ENCODE measurements at regions of chr1 and their contacts with region 1.

Region 1: DNA sequence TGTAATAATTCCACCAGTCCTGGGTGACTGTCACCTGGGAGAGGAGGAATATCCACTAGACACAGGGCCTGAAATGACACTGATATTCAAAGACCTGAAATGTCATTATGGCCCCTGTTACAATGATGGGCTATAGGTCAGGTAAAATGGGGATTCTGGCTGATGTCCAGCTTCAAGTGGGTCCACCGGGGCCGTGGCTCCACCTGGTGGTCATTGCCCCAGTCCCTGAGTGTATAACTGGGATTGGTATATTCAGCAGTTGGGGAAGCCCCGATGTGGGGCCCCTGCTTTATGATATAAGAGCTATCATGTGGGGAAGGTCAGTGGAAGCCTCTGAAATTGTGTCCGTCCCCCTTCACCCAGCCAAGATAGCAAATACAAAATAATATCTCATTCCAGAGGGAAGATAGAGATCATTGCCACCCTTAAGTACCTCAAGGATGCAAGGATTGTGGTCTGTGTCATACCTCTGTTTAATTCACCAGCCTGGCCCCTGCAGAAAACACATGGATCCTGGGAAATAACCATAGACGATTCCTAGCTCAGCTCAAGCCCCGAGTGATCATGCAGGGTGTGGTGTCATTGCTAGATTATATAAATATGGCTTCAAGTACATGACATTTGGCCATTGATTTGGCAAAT is 19.4 kb downstream of the PLEKHO1 start:
- DNase-seq: peak in 1 of 2 donors; percentile 87
- H3K4me3 ChIP-seq: no peak overlapping the region
- H3K27ac ChIP-seq: no peak overlapping the region
- H3K4me1 ChIP-seq: peaks cover 4 to 8% of the 10 kb centered on the region in 2 donors
- H3K27me3 ChIP-seq: no peaks in the 10 kb centered on the region
- CTCF ChIP-seq: peak; percentile 72 to 85 (median 81)

Region 2: GRCh38 chr1:149962123-149962548 is 206.9 kb before region 1 on chr1:
- intact Hi-C with region 1: loop called (anchors 5 kb)
- DNase-seq: peak in 1 of 2 donors; percentile 79
- H3K4me3 ChIP-seq: no peak overlapping the region
- H3K27ac ChIP-seq: peak overlapping the region; percentile 51 to 65
- H3K4me1 ChIP-seq: peaks cover 0 to 13% of the 10 kb centered on the region in 2 donors
- H3K27me3 ChIP-seq: no peaks in the 10 kb centered on the region
- CTCF ChIP-seq: peak; percentile 70 to 80 (median 75)

Region 3: DNA sequence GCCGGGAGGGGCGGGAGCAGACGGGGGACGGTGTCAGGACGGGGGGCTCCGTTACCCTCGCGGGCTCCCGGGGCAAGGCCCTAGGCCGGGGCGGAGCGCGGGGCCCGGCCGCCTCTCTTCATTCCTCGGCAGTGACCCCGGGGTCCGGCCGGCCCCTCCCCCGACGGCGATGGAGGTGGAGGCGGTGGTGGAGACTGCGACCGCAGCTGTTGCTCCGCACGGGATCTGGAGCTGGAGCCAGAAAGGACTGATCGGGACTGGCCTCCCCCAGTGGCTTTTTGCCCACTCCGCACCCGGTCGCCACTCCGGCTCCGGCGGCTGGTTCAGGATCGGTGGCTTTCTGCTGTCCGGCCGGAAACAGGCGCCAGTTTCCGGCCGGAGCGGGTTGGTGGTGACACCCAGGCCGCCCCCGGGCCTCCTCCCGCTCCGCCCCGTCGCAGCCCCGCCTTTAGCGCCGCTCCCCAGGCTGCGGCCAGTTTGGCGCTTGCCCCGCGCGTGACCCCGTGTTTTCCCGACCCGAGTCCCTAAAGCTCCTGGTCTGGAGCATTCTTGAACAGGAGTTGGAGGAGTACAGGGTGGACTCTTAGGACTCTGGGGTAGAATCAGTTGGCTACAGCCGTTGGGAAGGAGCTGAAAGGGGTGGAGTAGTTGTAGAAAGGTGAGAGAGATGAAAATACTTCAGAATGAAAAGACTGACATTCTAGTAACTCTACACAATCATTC is 158.5 kb before region 1 on chr1 and contains the start of gene OTUD7B:
- intact Hi-C with region 1: loop called (anchors 5 kb)
- DNase-seq: peak; percentile 28 to 92
- H3K4me3 ChIP-seq: peak within 1 kb of the TSS; percentile 78 to 92
- H3K27ac ChIP-seq: peak within 1 kb of the TSS; percentile 97 to 99
- H3K4me1 ChIP-seq: peaks cover 12 to 15% of the 10 kb centered on the region in 2 donors
- H3K27me3 ChIP-seq: no peaks in the 10 kb centered on the region
- CTCF ChIP-seq: no peak
- total RNA-seq, gene OTUD7B: 7.1 TPM

Region 4: GRCh38 chr1:150072959-150073358 is 96.1 kb before region 1 on chr1:
- intact Hi-C with region 1: loop called (anchors 2 kb)
- DNase-seq: no peak
- H3K4me3 ChIP-seq: no peak overlapping the region
- H3K27ac ChIP-seq: no peak overlapping the region
- H3K4me1 ChIP-seq: peaks cover 4 to 6% of the 10 kb centered on the region in 2 donors
- H3K27me3 ChIP-seq: no peaks in the 10 kb centered on the region
- CTCF ChIP-seq: peak in 1 of 3 experiments; percentile 54

Region 5: GRCh38 chr1:150281837-150282653 is 113.0 kb after region 1 on chr1 and contains the start of gene CIART:
- intact Hi-C with region 1: no loop called
- DNase-seq: peak; percentile 93 to 98
- H3K4me3 ChIP-seq: peak within 1 kb of the TSS; percentile 67 to 85
- H3K27ac ChIP-seq: peak within 1 kb of the TSS; percentile 79 to 92
- H3K4me1 ChIP-seq: peaks cover 0 to 18% of the 10 kb centered on the region in 2 donors
- H3K27me3 ChIP-seq: no peaks in the 10 kb centered on the region
- CTCF ChIP-seq: no peak
- total RNA-seq, gene CIART: 0.64 TPM

Region 6: GRCh38 chr1:150346316-150346715 is 177.2 kb after region 1 on chr1:
- intact Hi-C with region 1: no loop called
- DNase-seq: no peak
- H3K4me3 ChIP-seq: no peak overlapping the region
- H3K27ac ChIP-seq: no peak overlapping the region
- H3K4me1 ChIP-seq: no peaks in the 10 kb centered on the region
- H3K27me3 ChIP-seq: no peaks in the 10 kb centered on the region
- CTCF ChIP-seq: no peak

Measured in ascending aorta (tissue), 2 donors.